Mammary epithelial cell (primary cell): ENCODE measurements at regions of chr15 and their contacts with region 1.

Region 1: DNA sequence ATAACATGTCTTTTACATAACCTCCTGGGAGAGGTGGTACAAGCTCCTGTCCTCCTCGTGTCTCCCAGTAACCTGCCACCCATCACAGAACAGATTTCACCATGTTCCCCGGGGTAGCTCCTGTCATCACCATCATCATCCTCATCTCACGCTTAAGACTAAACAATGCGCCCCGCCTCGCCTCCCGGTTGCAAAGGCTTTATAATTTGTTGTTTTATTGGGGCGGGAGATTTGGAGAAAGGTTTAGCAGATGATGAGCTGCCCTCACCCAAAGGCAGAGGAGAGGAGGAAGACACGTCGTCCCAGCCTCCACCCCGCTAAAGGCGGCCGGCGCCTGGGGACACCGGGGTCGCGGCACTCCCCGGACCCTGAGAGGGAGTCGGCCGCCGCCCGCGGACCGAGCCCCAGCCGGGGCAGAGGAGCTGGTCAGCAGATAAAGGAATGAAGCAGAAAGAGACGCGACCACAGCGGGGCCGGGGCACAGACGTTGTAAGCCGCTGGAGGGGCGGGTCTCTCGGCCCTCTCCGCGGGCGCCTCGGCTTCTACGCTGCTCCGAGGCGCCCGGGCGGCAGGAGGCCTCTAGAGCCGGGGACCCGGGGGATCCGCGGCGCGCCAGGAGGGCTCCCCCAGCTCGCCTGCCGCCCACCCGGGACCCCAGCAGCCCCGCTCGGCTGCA is 589 bp downstream of the HERC1 start:
- DNase-seq: peak; percentile 32
- H3K4me3 ChIP-seq: peak overlapping the region; percentile 71 to 98 (median 95)
- H3K27ac ChIP-seq: peak overlapping the region; percentile 80
- H3K4me1 ChIP-seq: peaks cover 12% of the 10 kb centered on the region
- H3K27me3 ChIP-seq: no peaks in the 10 kb centered on the region
- CTCF ChIP-seq: no peak

Region 2: GRCh38 chr15:63610200-63610841 is 222.8 kb before region 1 on chr15:
- CTCF ChIA-PET with region 1: no interaction called
- dilution Hi-C with region 1: no loop called
- in situ Hi-C with region 1: no loop called
- intact Hi-C with region 1: loop called (anchors 5 kb)
- DNase-seq: peak; percentile 67
- H3K4me3 ChIP-seq: no peak overlapping the region
- H3K27ac ChIP-seq: no peak overlapping the region
- H3K4me1 ChIP-seq: peaks cover under 1% of the 10 kb centered on the region
- H3K27me3 ChIP-seq: no peaks in the 10 kb centered on the region
- CTCF ChIP-seq: peak; percentile 81 to 85

Region 3: DNA sequence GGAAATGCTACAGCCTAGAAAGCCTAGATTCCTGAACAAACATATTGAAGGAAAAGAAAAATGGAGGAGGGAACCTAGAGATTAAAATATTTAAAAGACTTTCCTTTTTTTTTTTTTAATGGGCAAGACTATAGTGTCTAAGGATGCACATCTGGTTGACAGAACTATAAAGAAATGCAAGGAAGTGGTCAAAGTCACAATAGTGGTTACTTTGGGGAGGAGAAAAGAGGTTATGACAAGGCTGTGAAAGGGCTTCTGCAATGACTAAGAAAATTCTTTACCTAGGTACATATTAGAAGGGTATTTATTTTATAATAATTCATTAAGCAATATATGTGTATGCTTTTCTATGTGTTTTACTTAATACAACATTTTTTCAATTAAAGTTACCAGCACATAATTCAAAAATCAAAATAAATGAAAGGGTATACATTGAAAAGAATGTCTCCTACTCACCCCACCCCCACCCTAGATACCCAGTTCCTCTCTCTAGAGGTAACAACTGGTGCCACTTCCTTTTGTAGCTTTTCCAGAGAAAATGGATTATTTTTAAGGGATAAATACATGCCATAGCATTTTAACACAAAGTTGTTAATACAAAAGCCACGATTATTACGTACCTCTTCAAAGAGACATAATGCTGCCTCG is 69.6 kb before region 1 on chr15:
- CTCF ChIA-PET with region 1: no interaction called
- dilution Hi-C with region 1: no loop called
- in situ Hi-C with region 1: no loop called
- intact Hi-C with region 1: loop called (anchors 5 kb)
- DNase-seq: peak; percentile 52
- H3K4me3 ChIP-seq: no peak overlapping the region
- H3K27ac ChIP-seq: no peak overlapping the region
- H3K4me1 ChIP-seq: peaks cover 15% of the 10 kb centered on the region
- H3K27me3 ChIP-seq: no peaks in the 10 kb centered on the region
- CTCF ChIP-seq: no peak

Region 4: GRCh38 chr15:63870403-63871209 is 37.4 kb after region 1 on chr15:
- CTCF ChIA-PET with region 1: no interaction called
- dilution Hi-C with region 1: no loop called
- in situ Hi-C with region 1: no loop called
- intact Hi-C with region 1: no loop called
- DNase-seq: peak; percentile 73
- H3K4me3 ChIP-seq: no peak overlapping the region
- H3K27ac ChIP-seq: no peak overlapping the region
- H3K4me1 ChIP-seq: no peaks in the 10 kb centered on the region
- H3K27me3 ChIP-seq: no peaks in the 10 kb centered on the region
- CTCF ChIP-seq: no peak

Region 5: DNA sequence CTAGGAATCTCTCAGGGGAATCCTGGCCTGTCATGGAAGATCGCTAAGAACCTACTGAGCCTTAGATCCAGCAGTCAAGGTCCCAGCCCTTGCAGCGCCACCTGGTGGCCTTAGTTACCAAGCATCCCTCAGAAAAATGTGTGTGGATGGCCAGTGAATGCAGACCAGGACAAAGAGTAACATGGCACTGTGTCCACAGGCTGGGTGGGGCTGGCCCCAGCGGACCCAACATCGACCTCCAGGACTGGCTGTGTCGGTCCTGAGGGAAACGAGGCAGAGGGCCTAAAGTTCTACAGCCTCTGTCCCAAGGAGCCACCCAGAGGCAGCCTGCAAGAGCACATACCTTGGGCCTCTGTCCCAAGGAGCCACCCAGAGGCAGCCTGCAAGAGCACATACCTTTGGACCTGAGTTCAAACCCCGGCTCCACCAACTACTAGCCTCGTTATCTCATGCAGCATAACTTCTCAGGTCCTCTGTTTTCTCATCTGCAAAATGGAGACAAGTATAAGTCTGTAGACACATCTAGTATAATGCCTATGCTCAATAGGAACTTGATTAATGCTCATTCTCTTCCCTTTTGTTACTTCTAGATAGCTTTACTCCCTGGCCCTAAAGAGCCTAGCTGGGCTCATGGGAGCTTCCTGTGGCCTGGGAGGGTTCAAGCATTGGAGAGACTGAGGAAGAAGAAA is 58.1 kb after region 1 on chr15:
- CTCF ChIA-PET with region 1: no interaction called
- dilution Hi-C with region 1: no loop called
- in situ Hi-C with region 1: no loop called
- intact Hi-C with region 1: loop called (anchors 2 kb)
- DNase-seq: peak; percentile 60
- H3K4me3 ChIP-seq: no peak overlapping the region
- H3K27ac ChIP-seq: no peak overlapping the region
- H3K4me1 ChIP-seq: peaks cover 2% of the 10 kb centered on the region
- H3K27me3 ChIP-seq: no peaks in the 10 kb centered on the region
- CTCF ChIP-seq: peak; percentile 74 to 86

Region 6: DNA sequence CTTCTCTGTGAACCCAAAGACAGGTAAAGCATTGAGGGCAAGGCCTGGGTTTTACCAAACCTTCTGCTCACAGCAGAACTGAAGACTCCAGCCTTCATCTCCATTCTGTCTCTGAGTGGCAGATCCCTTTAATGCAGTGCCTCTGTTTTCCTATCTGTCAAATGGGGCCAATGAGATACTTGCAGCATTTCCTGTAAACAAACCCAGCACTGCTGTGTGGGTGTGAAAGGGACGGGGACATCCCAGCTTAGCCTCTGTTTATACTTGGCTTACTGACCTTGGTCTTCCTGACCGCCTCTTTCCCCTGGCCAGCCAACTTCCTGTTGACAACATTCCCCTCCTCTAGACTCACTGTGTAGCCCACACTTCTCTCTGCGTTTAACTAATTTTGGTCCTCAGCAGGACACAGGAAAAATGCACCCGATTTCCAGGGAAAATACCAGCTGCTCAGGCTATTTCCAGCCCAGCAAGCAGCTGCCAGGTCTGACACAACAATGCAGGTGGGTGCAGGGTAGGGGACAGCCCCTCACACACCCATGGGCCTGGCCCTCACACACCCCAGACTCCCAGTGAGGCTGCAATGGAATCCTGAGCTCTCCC is 106.5 kb after region 1 on chr15:
- CTCF ChIA-PET with region 1: no interaction called
- dilution Hi-C with region 1: no loop called
- in situ Hi-C with region 1: no loop called
- intact Hi-C with region 1: loop called (anchors 5 kb)
- DNase-seq: no peak
- H3K4me3 ChIP-seq: no peak overlapping the region
- H3K27ac ChIP-seq: no peak overlapping the region
- H3K4me1 ChIP-seq: peaks cover 5% of the 10 kb centered on the region
- H3K27me3 ChIP-seq: no peaks in the 10 kb centered on the region
- CTCF ChIP-seq: no peak